CD4-positive, alpha-beta T cell (primary cell): ENCODE measurements at regions of chr2 and their contacts with region 1.

Region 1: DNA sequence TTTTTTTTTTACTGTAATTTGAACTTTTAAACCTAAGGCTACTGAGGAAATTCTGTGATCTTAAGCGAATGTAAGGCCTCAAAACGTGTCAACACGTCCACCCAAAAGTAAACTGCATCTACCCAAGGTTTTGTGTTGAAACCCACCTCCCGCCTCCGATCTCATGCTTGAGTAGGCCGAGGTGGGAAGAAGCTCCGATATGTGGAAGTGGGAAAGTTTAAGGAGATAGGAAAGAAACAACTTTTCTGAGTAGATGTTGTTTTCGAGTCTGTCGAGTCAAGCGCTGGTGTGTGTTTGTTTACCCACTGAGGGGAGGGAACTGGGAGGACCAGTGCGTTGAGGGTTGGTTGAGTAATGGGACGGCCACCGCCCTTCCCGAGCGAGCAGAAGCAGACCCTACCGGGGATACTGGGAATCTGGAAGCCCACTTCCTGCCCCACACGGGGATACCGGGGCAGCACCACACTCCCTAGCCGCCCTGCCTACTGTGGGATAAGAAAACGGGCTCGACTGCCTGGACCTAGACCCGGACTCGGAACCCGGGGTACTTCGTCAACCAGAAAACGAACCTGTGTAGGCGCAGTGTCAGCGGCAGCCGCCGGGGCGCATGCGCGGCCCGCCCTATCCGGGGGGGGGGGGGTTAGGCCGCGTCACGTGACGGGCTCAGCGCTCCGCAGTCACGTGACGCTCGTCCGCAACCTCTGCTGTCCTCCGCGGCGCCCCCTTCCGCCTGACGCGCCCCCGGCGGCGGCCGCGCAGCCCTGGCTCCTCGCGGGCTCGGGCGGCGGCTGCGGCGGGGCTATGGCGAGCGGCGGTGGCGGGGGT is at the start of gene RETREG2:
- DNase-seq: peak; percentile 67 to 96 (median 78)
- ATAC-seq: peak; percentile 66
- H3K4me3 ChIP-seq: peak within 1 kb of the TSS; percentile 90
- H3K4me3 Mint-ChIP-seq: peak within 1 kb of the TSS; percentile 94
- H3K27ac ChIP-seq: peak within 1 kb of the TSS; percentile 97 to 99
- H3K27ac Mint-ChIP-seq: peak within 1 kb of the TSS; percentile 99
- H3K4me1 ChIP-seq: peaks cover 89% of the 10 kb centered on the region
- H3K4me1 Mint-ChIP-seq: peaks cover 72% of the 10 kb centered on the region
- H3K27me3 ChIP-seq: no peaks in the 10 kb centered on the region
- H3K27me3 Mint-ChIP-seq: no peaks in the 10 kb centered on the region
- CTCF ChIP-seq: no peak
- total RNA-seq, gene RETREG2: 82.3 to 83.2 TPM

Region 2: DNA sequence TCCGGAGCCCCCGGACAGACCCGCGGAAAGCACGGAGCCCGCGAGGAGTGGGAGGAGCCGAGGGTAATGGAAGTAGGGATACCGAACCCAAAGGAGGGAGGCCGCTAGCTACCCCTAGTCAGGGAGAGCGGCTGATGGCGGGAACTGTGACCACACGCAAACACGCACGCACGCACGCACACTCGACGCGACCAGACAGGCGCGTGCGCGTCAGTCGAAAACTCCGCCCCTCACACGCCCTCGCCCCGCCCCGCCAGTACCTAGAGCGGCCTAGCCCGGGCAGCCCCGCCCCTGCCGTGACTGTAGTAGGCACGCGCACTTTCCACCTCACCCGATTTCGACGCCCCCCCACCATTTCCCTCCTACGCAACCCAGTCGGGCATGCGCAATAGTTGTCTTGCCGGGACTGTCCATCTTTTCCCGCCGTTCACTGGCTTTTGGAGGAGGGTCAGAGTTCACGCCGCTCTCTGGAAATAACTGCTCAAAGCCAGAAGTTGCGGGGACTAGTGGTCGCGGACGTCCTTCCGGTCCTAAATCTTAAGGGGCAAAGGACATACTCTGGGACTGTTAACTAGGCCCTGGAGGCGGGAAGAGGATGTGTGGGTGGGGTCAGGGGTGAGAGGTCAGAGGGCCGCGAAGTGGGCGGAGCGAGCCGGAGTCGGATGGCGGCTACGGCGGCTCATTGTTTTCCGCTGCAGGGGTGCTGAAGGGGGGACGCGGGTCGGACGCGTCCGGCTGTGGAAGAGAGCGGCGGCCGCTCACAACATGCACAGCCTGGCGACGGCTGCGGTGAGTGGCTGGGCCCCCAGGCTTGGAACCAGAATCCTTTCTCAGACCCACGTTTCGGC is 609.4 kb before region 1 on chr2 and contains the starts of genes CNOT9 and USP37:
- CTCF ChIA-PET with region 1: no interaction called
- POLR2A ChIA-PET with region 1: no interaction called
- intact Hi-C with region 1: loop called in 1 of 2 experiments (anchors 10 kb)
- DNase-seq: peak; percentile 99 to 100 (median 100)
- ATAC-seq: peak; percentile 85
- H3K4me3 ChIP-seq: peak within 1 kb of the TSS; percentile 77
- H3K4me3 Mint-ChIP-seq: peak within 1 kb of the TSS; percentile 96
- H3K27ac ChIP-seq: peak within 1 kb of the TSS; percentile 98 to 99
- H3K27ac Mint-ChIP-seq: peak within 1 kb of the TSS; percentile 97
- H3K4me1 ChIP-seq: peaks cover 32% of the 10 kb centered on the region
- H3K4me1 Mint-ChIP-seq: peaks cover 77% of the 10 kb centered on the region
- H3K27me3 ChIP-seq: no peaks in the 10 kb centered on the region
- H3K27me3 Mint-ChIP-seq: no peaks in the 10 kb centered on the region
- CTCF ChIP-seq: no peak
- total RNA-seq, gene CNOT9: 62.8 to 66.8 TPM
- total RNA-seq, gene USP37: 20.2 to 24.4 TPM

Region 3: DNA sequence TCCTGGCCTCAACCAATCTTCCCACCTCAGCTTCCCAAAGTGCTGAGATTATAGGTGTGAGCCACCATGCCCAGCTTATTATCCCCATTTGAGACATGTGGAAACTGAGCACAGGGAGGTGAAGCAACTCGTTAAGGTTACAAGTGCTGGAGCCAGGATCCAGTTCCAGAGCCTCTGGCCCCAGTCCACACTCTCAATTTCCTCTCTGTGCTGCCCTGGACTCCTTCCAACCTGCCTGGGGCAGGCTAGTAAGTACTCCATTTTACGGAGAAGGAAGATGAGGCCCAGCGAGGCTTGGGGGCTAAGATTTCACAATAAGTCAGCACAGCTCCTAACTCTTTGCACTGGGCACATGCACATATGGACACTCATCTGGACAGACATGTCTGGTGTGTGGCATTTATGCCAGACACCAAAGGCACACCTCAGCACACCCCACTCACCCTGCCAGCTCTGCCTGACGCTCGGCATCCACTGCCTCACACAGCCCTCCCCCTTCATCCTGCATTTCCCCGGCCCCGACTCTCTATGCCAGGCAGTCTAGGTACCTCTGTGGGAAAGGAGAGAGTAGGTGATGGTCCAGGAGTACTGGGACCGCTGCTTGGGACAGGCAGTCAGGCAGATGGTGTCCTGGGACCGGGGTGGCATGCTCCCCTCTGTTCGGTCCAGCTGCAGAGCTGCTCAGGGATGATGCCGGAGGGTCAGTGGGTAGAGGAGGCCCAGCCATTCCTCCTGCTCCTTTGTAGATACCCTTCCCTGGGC is 157.0 kb before region 1 on chr2:
- CTCF ChIA-PET with region 1: no interaction called
- POLR2A ChIA-PET with region 1: no interaction called
- intact Hi-C with region 1: no loop called
- DNase-seq: no peak
- ATAC-seq: no peak
- H3K4me3 ChIP-seq: no peak overlapping the region
- H3K4me3 Mint-ChIP-seq: no peak overlapping the region
- H3K27ac ChIP-seq: no peak overlapping the region
- H3K27ac Mint-ChIP-seq: no peak overlapping the region
- H3K4me1 ChIP-seq: no peaks in the 10 kb centered on the region
- H3K4me1 Mint-ChIP-seq: no peaks in the 10 kb centered on the region
- H3K27me3 ChIP-seq: no peaks in the 10 kb centered on the region
- H3K27me3 Mint-ChIP-seq: peaks cover 27% of the 10 kb centered on the region
- CTCF ChIP-seq: no peak

Region 4: DNA sequence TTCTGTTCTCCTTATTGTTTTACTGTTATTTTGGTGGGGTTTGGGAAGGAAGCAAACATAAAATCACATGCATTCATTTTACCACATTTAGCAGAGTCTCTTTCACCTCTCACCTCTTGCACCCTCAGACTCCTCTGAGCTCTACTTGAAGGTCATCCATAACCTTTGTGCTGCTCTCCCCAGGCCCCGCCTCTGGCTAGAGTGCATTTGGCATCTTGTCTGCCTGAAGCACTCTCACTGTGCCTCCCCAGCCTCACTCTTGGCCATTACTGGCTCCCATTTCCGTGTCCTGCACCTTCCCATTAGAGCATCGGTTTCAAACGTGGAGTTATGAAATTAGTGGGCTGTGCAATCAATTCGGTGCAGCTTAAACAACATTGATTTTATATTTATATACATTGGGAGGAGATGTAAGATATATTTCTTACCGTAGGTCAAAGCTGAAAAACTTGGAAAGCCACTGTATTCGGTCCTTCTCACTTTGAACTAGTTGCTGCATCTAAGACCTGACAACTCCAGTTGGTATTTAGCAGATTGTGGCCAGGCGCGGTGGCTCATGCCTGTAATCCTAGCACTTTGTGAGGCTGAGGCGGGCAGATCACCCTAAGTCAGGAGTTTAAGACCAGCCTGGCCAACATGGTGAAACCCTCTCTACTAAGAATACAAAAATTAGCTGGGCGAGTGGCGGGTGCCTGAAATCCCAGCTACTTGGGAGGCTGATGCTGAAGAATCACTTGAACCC is 21.9 kb after region 1 on chr2:
- CTCF ChIA-PET with region 1: no interaction called
- POLR2A ChIA-PET with region 1: interaction called, 14 read pairs
- intact Hi-C with region 1: no loop called
- DNase-seq: peak in 1 of 14 experiments; percentile 0
- ATAC-seq: no peak
- H3K4me3 ChIP-seq: no peak overlapping the region
- H3K4me3 Mint-ChIP-seq: no peak overlapping the region
- H3K27ac ChIP-seq: no peak overlapping the region
- H3K27ac Mint-ChIP-seq: no peak overlapping the region
- H3K4me1 ChIP-seq: peaks cover 6% of the 10 kb centered on the region
- H3K4me1 Mint-ChIP-seq: peaks cover 7% of the 10 kb centered on the region
- H3K27me3 ChIP-seq: peaks cover 0 to 2% of the 10 kb centered on the region in 2 experiments
- H3K27me3 Mint-ChIP-seq: peaks cover 6% of the 10 kb centered on the region
- CTCF ChIP-seq: no peak

Region 5: GRCh38 chr2:219229305-219230058 is 51.7 kb after region 1 on chr2 and contains the starts of genes ANKZF1 and ATG9A:
- CTCF ChIA-PET with region 1: no interaction called
- POLR2A ChIA-PET with region 1: interaction called, 32 read pairs
- intact Hi-C with region 1: loop called in 1 of 2 experiments (anchors 1 kb)
- DNase-seq: peak; percentile 95 to 99 (median 97)
- ATAC-seq: peak; percentile 94
- H3K4me3 ChIP-seq: peak within 1 kb of the TSS; percentile 76
- H3K4me3 Mint-ChIP-seq: peak within 1 kb of the TSS; percentile 96
- H3K27ac ChIP-seq: peak within 1 kb of the TSS; percentile 46 to 91
- H3K27ac Mint-ChIP-seq: peak within 1 kb of the TSS; percentile 99
- H3K4me1 ChIP-seq: peaks cover 49% of the 10 kb centered on the region
- H3K4me1 Mint-ChIP-seq: peaks cover 65% of the 10 kb centered on the region
- H3K27me3 ChIP-seq: no peaks in the 10 kb centered on the region
- H3K27me3 Mint-ChIP-seq: no peaks in the 10 kb centered on the region
- CTCF ChIP-seq: no peak
- total RNA-seq, gene ANKZF1: 128 to 135 TPM
- total RNA-seq, gene ATG9A: 105 to 106 TPM

Region 6: DNA sequence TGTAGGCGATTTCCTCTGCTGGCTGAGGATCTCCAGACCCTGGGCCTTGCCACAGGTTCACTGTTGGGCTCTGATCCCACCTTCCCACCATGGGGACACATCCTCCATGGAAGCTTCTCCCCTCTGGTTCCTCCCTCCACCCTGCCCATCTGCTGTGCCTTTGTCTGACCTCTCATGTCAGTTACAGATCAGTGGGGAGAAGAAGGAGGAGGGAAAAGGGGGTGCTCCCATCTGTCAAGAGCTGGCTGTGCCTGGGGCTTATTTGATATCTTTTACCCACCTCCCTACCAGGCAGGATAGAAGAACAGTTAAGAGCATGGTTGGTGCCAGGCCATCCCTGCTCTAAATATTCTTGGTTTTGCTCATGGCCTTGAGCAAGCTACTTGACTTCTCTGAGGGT is 89.1 kb after region 1 on chr2:
- CTCF ChIA-PET with region 1: no interaction called
- POLR2A ChIA-PET with region 1: no interaction called
- intact Hi-C with region 1: no loop called
- DNase-seq: no peak
- ATAC-seq: no peak
- H3K4me3 ChIP-seq: no peak overlapping the region
- H3K4me3 Mint-ChIP-seq: no peak overlapping the region
- H3K27ac ChIP-seq: no peak overlapping the region
- H3K27ac Mint-ChIP-seq: no peak overlapping the region
- H3K4me1 ChIP-seq: no peaks in the 10 kb centered on the region
- H3K4me1 Mint-ChIP-seq: no peaks in the 10 kb centered on the region
- H3K27me3 ChIP-seq: peaks cover 0 to 2% of the 10 kb centered on the region in 2 experiments
- H3K27me3 Mint-ChIP-seq: no peaks in the 10 kb centered on the region
- CTCF ChIP-seq: no peak

Region 7: DNA sequence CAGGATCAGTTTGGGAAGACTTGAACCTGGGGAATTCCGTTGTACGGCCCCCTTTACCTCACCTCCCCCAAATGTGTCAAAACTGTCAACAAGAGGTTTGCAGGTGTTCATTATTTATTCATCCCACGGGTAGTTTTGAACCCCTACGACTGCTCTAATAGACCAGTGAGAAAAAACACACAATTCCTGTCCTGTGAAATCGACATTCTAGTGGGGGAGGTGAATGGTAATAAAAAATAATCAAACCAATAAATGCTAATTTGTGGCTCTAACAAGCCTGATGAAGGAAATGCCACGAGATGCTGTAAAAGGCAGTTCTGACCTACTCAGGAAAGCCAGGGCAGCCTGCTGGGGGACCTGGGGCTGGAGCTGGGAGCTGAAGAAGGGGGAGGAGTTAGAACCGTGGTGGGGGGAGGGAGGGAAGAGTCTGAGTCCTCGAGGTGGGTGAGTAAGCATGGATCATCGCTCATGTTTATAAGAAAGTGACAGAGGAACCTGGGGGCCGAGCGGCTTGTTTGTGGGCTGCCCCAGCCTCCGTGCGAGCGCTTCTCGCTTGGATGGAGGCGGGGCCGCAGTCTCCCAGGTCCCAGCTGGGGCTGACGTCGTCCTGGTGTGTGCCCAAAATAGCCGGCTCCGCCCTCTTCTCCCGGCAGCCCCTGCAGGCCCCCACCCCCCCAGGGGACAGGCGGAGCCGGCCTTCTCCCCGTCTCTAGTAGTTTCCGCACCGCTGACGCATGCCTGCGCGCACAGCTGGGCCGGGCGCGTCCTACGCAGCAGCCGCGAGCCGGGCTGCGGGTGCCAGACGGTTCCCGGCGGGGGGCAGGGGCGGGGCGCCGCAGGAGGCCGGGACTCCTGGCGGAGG is 101.1 kb after region 1 on chr2 and contains the start of gene DNAJB2:
- CTCF ChIA-PET with region 1: no interaction called
- POLR2A ChIA-PET with region 1: interaction called, 39 read pairs
- intact Hi-C with region 1: loop called (anchors 2 kb)
- DNase-seq: peak; percentile 96 to 100 (median 98)
- ATAC-seq: peak; percentile 76
- H3K4me3 ChIP-seq: peak within 1 kb of the TSS; percentile 66
- H3K4me3 Mint-ChIP-seq: peak within 1 kb of the TSS; percentile 97
- H3K27ac ChIP-seq: peak within 1 kb of the TSS; percentile 95 to 97
- H3K27ac Mint-ChIP-seq: peak within 1 kb of the TSS; percentile 98
- H3K4me1 ChIP-seq: peaks cover 43% of the 10 kb centered on the region
- H3K4me1 Mint-ChIP-seq: peaks cover 43% of the 10 kb centered on the region
- H3K27me3 ChIP-seq: no peaks in the 10 kb centered on the region
- H3K27me3 Mint-ChIP-seq: no peaks in the 10 kb centered on the region
- CTCF ChIP-seq: no peak
- total RNA-seq, gene DNAJB2: 151 to 161 TPM